ENCODE measurements at regions of chr7 and their contacts with region 1.

Region 1: GRCh38 chr7:20330240-20330927 is at the start of gene ITGB8:
- DNase-seq: peak; percentile 86
- H3K4me3 ChIP-seq: peak within 1 kb of the TSS; percentile 59 to 72
- H3K27ac ChIP-seq: peak within 1 kb of the TSS; percentile 86 to 88
- H3K4me1 ChIP-seq: no peaks in the 10 kb centered on the region
- H3K27me3 ChIP-seq: no peaks in the 10 kb centered on the region
- CTCF ChIP-seq: no peak
- POLR2A ChIP-seq: peak; percentile 43
- total RNA-seq, gene ITGB8: 50.3 to 99.5 TPM

Region 2: DNA sequence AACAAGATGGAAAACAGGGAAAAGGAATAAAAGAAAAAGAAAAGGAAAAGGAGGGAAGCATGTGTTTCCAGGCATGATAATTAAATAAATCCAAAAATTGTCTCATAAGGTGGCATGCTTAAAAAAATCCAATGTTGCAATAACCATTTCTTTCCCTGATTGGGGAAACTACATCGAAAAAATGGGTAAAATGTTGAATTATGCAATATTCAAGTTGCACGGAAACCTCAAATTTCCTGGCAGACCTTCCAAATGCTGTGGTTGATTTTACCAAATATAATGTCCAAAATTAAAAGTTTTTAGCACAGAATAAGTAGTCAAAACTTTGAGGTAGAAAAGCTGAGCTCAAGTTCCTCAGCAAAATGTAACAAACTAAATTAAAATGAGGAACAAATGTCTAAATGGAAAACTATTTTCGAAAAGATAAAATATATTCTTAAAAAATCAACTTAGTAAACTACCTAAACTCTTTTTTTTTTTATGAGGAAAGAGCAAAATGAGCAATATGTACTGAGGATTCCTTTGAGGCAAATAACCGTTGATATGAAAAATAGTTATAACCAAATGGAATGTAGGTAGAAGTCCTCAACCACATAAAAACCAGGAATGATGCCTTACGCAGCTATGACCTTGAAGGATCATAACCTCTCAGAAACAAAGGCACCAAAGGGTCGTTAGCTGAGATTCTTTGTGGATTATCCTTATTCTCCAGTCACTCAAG is 165.8 kb before region 1 on chr7:
- intact Hi-C with region 1: loop called (anchors 10 kb)
- DNase-seq: no peak
- H3K4me3 ChIP-seq: no peak overlapping the region
- H3K27ac ChIP-seq: no peak overlapping the region
- H3K4me1 ChIP-seq: no peaks in the 10 kb centered on the region
- H3K27me3 ChIP-seq: no peaks in the 10 kb centered on the region
- CTCF ChIP-seq: no peak
- POLR2A ChIP-seq: no peak

Region 3: GRCh38 chr7:20407585-20408461 is 77.4 kb after region 1 on chr7:
- intact Hi-C with region 1: loop called (anchors 10 kb)
- DNase-seq: peak; percentile 23
- H3K4me3 ChIP-seq: no peak overlapping the region
- H3K27ac ChIP-seq: no peak overlapping the region
- H3K4me1 ChIP-seq: no peaks in the 10 kb centered on the region
- H3K27me3 ChIP-seq: no peaks in the 10 kb centered on the region
- CTCF ChIP-seq: no peak
- POLR2A ChIP-seq: no peak

Region 4: GRCh38 chr7:20440472-20441105 is 110.2 kb after region 1 on chr7:
- intact Hi-C with region 1: loop called (anchors 10 kb)
- DNase-seq: no peak
- H3K4me3 ChIP-seq: no peak overlapping the region
- H3K27ac ChIP-seq: no peak overlapping the region
- H3K4me1 ChIP-seq: no peaks in the 10 kb centered on the region
- H3K27me3 ChIP-seq: no peaks in the 10 kb centered on the region
- CTCF ChIP-seq: peak in 1 of 4 experiments; percentile 27
- POLR2A ChIP-seq: no peak

Measured in prostate gland (tissue), 2 donors.